OCI-LY7 (cell line): ENCODE measurements at regions of chr7 and their contacts with region 1.

Region 1: DNA sequence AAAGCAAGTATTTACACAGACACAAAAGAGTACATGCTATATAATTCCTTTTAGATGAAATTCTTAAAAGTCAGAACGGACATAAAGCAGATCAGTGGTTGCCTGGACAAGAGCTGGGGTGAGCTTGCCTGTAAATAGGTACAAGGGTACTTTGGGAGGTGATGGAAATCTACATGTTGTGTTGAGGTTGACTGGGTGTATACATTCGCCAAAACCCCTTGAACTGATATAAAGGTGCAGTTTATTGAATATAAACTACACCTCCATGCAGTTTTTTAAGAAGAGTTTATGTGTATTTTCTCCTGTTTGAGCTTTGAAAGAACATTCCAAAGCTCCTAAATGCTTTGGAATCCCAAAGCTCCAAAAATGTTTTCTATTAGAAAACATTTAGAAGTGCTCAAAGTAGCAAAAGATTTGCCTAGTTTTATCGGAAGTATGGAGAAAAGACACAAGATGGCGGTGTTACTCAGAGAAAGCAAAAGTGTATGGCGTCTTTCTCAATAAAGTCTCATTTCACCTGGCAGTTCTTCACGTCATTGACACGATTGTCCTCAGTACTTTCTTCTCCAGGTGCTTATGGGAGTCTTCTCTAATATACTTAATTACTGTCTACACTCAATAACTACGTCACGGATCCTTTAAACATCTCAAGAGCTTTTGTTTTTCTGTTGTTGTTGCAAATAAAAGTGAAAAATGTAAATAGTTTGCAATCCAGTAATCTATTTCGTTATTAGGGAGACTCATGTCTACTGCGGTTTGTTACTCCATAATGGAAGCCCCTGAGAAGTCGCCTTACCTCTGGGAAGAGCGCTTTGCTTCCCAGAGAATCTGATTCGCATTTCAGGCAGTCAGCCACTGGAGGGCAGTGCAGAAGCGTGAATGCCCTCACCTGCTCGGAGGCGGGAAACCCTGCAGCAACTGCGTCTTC is 14.7 kb upstream of the SEC61G start:
- DNase-seq: peak; percentile 65
- H3K4me3 ChIP-seq: peak overlapping the region; percentile 30
- H3K27ac ChIP-seq: no peak overlapping the region
- H3K4me1 ChIP-seq: no peaks in the 10 kb centered on the region
- CTCF ChIP-seq: peak; percentile 82

Region 2: DNA sequence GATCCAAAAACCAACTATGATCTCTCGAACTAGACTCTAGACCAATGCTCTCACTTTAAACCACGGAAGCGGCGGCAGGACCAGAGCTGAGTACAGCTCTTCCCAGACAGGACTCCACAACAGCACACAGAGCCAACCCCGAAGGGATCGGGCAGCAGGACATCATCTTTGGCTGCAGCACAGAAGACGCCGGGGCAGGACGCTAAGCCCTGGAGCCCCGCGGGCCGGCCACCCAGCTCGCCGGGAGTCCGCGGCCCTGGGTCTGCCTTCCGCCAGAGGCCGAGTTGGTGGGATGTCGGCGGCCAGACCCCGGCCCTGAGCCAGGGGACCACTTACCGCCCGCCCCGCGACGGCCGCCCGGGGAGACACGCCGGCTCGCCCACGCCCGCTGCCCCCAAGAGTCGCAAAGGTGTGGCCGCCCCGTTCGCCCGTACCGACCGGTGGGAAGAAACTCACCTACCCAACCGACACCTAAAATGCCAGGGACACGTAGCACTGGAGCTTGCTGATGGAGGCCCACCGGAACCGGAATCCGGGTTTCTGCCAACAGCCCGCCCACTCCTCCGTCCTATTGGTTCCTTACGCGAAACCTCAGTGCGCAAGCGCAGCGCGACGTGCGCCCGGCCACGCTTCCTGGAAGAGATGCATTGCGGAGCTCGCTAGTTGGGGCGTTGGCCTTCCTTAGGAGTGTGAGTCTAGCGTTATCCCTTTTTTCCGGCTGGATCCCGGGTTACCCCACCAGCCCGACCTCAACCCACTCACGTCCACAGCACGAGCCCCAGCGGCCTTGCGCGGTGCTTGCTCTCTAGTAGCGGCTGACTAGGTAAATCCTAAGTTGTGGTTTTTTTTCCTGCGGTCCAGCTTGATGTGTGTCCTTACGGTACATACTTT is 14.8 kb before region 1 on chr7 and contains the start of gene SEC61G:
- CTCF ChIA-PET with region 1: no interaction called
- POLR2A ChIA-PET with region 1: interaction called, 29 read pairs
- intact Hi-C with region 1: no loop called
- DNase-seq: peak; percentile 96
- H3K4me3 ChIP-seq: peak within 1 kb of the TSS; percentile 100
- H3K27ac ChIP-seq: peak within 1 kb of the TSS; percentile 54
- H3K4me1 ChIP-seq: peaks cover 20% of the 10 kb centered on the region
- CTCF ChIP-seq: no peak
- total RNA-seq, gene SEC61G: 79.6 and 88.7 TPM in 2 replicates

Region 3: DNA sequence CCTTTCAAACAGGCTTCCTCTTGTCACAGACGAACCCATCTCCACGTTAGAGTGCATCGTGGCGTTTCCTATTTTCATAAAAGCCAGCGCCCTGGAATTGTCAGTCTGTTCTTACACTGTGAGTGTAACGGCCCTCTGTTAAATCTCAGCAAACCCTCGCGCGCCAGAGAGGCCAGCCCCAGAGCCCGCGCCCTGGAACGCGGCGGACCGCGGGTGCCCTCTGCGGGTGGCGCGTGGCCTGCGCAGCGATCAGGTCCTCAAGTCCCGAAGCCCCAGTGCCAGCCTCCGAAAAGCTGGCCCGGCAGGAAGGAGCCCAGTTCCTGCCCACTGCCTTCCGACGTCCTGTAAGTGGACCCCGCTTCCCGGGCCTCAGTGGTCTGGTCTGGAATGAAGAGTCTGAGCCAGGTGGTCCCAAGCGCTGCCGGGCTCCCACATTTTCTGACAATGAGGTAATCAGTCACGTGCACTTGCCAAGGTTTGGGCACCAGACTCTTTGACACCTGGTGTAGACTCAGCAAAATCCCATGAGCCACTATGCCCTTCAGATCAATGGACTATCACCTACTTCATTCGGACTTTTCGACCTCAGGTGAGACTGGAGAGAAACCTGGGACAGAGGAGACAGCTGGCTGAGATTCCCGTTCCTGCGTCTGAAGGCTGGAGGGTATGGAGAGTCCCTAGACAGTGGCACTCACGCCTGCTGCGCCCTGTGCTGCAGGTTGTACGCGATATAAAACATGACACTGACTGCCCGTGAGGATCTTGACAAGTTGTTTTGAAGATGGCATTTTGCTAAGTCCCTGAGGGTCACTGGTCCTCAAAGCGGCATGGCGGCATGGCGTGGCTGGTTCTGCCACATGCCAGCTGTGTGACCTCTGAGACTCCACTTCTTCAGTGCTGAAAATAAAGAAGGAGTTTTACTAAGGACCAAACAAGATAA is 482.0 kb after region 1 on chr7:
- CTCF ChIA-PET with region 1: no interaction called
- POLR2A ChIA-PET with region 1: no interaction called
- intact Hi-C with region 1: loop called (anchors 1 kb)
- DNase-seq: peak; percentile 77
- H3K4me3 ChIP-seq: peak overlapping the region; percentile 64
- H3K27ac ChIP-seq: no peak overlapping the region
- H3K4me1 ChIP-seq: peaks cover 5% of the 10 kb centered on the region
- CTCF ChIP-seq: peak; percentile 81

Region 4: DNA sequence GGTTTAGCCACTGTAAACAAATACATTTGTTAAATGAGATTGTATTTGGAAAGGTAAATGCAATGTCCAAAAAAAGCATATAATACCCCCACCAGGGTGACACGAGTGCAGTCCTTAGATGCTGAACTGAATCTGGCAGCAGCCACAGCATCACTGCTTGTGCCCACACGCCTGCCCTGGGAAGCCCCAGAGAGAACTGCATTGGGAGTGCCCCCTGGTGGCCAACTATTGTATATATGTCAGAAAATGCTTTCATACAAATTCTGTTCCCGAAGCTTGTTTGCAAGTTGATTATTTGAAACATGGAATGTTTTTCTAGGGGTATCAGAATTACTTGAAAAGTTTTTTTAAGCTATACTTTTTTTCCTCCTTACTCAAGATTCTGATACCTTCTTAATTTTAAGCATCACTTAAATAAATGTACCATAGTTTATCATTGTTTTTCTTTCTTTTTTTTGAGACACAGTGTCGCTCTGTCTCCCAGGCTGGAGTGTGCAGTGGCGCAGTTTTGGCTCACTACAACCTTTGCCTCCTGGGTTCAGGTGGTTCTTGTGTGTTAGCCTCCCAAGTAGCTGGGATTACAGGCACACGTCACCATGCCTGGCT is 641.5 kb after region 1 on chr7:
- CTCF ChIA-PET with region 1: no interaction called
- POLR2A ChIA-PET with region 1: no interaction called
- intact Hi-C with region 1: loop called (anchors 5 kb)
- DNase-seq: peak; percentile 84
- H3K4me3 ChIP-seq: no peak overlapping the region
- H3K27ac ChIP-seq: no peak overlapping the region
- H3K4me1 ChIP-seq: no peaks in the 10 kb centered on the region
- CTCF ChIP-seq: peak; percentile 93